Psoas muscle (tissue), 8 donors: ENCODE measurements at regions of chr3 and their contacts with region 1.

Region 1: DNA sequence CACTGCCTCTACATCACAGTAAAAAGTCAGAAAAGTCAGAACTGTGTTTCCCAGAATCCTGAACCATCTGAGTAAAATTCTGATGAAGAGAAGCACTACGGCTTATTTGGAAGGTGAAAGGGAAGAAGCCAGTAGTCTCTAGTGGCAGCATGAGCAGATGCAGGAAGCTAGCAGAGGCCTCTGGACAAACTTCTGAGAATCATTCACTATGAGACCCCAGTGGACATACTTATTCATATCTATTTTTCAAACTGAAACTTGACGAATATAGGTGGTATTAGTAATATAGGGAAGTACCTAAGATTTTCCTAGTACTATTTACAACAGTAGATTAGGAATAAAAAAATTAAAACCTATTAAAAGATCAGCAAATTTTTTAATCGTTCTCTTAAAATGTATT is 272.8 kb upstream of the TTC14 start:
- DNase-seq: no peak
- ATAC-seq: no peak
- H3K4me3 ChIP-seq: no peak overlapping the region
- H3K27ac ChIP-seq: no peak overlapping the region
- H3K4me1 ChIP-seq: no peaks in the 10 kb centered on the region
- H3K27me3 ChIP-seq: no peaks in the 10 kb centered on the region
- CTCF ChIP-seq: no peak

Region 2: DNA sequence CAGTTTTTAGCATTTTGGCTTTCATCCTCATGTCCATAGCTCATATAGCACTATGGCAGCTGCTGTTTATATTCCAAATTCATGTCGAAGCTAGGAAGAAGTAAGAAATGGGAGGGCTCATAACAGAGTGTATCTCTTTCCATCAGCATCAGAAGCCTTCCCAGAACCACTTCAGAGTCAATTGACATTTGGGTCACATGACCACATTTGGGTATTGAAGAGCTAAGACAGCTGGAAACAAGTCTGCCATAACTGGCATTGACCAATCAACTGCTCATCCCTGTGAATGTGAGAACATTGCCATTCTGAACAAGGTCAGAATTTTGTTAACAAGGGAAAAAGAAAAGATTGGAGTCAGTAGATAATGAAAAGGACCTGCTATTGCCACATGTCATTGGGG is 21.2 kb before region 1 on chr3:
- intact Hi-C with region 1: loop called in 1 of 2 experiments (anchors 1 kb)
- DNase-seq: no peak
- ATAC-seq: no peak
- H3K4me3 ChIP-seq: no peak overlapping the region
- H3K27ac ChIP-seq: no peak overlapping the region
- H3K4me1 ChIP-seq: peaks cover 6% of the 10 kb centered on the region
- H3K27me3 ChIP-seq: no peaks in the 10 kb centered on the region
- CTCF ChIP-seq: no peak

Region 3: DNA sequence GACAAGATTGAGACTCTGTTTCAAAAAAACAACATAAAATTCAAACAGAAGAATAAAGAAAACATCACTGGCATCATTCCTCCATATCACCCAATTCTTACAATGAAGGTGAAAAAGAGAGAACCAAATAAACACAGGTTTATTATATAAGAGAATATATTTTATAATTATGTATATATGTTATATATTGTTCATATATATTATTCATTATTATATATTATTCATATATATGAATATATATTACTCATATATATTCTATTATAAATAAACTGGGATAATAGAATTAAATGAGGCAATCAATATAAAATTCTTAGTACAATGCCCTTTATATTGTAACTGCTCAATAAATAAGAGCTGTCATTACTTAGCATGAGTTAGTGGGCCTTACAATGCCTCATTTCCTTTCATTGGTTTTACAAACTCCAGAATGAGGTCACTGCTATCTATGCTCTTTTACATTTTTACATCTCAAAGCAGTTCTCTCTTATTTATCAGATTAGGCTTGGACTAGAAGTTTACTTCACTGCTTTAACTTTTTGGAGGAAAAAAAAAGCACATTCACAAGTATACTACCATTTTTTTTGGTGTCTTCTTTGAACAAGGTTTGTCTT is 137.3 kb after region 1 on chr3:
- intact Hi-C with region 1: no loop called
- DNase-seq: no peak
- ATAC-seq: no peak
- H3K4me3 ChIP-seq: no peak overlapping the region
- H3K27ac ChIP-seq: no peak overlapping the region
- H3K4me1 ChIP-seq: no peaks in the 10 kb centered on the region
- H3K27me3 ChIP-seq: no peaks in the 10 kb centered on the region
- CTCF ChIP-seq: no peak

Region 4: DNA sequence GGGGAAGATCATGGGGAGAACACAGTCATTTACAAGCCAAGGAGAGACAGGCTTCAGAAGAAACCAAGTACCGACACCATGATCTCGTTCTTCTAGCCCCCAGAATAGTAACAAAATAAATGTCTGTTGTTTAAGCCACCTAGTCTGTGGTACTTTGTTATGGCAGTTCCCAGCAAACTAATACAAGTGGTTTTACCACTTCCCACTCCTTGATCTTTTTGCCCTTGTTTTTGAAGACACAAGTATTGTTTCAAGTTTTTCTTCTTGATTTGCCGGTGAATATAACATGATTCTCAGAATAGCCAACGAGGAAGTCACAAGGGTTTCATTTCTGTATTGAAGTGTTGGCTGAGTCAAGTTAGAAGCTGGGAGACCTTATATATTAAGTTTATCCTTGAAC is 1602.9 kb after region 1 on chr3:
- intact Hi-C with region 1: no loop called
- DNase-seq: no peak
- ATAC-seq: no peak
- H3K4me3 ChIP-seq: no peak overlapping the region
- H3K27ac ChIP-seq: no peak overlapping the region
- H3K4me1 ChIP-seq: no peaks in the 10 kb centered on the region
- H3K27me3 ChIP-seq: peaks cover 0 to 2% (median 0%) of the 10 kb centered on the region in 3 donors
- CTCF ChIP-seq: no peak